ENCODE measurements at regions of chr1 and their contacts with region 1.

Region 1: GRCh38 chr1:92817986-92818764 is 13.7 kb upstream of the RPL5 start:
- DNase-seq: no peak
- H3K4me3 ChIP-seq: no peak overlapping the region
- H3K27me3 ChIP-seq: no peaks in the 10 kb centered on the region
- CTCF ChIP-seq: peak; percentile 73

Region 2: DNA sequence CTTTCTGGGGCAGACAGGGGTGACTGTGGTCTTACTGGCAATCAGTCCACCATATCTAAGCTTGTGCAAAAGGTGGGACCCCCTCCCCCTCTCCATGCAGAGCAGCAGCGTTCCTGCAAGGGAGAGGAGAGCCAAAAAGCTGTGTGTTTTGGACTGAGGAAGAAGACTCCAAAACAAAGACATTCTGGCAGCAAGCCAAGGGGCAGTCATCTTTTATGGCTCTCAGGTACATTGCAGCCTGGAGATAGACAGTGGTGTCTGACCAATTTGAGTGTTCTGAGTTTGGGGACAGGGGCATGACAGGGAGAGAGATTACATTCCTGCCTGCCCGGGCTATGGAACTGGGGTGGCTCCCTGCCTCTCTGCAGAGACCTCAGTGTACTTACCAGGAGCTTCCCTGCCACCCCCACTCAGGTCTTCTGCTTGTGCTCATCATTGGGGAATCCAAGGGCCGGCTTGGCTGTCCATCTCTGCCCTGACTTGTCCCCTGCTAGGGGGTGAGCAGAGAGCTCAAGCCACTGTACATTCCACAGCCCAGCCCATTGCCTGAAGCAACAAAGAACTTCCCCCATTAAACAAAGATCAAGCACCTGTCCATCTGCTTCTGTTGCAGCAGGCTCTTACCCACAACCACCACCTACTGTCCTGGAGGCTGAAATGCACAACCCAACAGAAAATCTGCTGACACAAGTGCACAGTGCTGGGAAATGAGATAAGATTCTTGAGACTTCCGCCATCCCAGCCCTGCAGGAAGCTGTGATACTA is 164.4 kb before region 1 on chr1:
- CTCF ChIA-PET with region 1: no interaction called
- POLR2A ChIA-PET with region 1: no interaction called
- DNase-seq: no peak
- H3K4me3 ChIP-seq: no peak overlapping the region
- H3K27me3 ChIP-seq: no peaks in the 10 kb centered on the region
- CTCF ChIP-seq: no peak

Region 3: DNA sequence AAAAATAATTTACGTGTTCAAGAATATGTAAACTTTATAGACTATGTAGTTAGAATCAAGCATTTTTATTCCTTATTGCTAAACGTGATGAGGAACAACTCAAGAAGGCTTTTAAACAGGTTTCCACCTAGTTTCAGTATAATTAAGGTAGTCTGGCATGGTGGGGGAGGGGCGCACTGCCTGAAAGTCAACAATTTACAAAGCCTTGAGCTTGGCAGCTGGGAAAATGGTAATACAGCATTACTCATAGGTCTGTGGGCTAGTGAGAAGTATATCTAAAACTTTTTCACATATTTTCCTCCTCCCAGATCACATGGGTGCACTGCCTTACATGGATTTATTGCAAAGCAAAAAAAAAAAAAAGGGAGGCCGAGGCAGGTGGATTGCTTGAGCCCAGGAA is 108.4 kb before region 1 on chr1:
- CTCF ChIA-PET with region 1: no interaction called
- POLR2A ChIA-PET with region 1: no interaction called
- DNase-seq: no peak
- H3K4me3 ChIP-seq: no peak overlapping the region
- H3K27me3 ChIP-seq: no peaks in the 10 kb centered on the region
- CTCF ChIP-seq: no peak

Region 4: GRCh38 chr1:92749024-92749634 is 69.0 kb before region 1 on chr1:
- CTCF ChIA-PET with region 1: interaction called, 68 read pairs
- POLR2A ChIA-PET with region 1: no interaction called
- DNase-seq: no peak
- H3K4me3 ChIP-seq: no peak overlapping the region
- H3K27me3 ChIP-seq: no peaks in the 10 kb centered on the region
- CTCF ChIP-seq: peak; percentile 81

Region 5: DNA sequence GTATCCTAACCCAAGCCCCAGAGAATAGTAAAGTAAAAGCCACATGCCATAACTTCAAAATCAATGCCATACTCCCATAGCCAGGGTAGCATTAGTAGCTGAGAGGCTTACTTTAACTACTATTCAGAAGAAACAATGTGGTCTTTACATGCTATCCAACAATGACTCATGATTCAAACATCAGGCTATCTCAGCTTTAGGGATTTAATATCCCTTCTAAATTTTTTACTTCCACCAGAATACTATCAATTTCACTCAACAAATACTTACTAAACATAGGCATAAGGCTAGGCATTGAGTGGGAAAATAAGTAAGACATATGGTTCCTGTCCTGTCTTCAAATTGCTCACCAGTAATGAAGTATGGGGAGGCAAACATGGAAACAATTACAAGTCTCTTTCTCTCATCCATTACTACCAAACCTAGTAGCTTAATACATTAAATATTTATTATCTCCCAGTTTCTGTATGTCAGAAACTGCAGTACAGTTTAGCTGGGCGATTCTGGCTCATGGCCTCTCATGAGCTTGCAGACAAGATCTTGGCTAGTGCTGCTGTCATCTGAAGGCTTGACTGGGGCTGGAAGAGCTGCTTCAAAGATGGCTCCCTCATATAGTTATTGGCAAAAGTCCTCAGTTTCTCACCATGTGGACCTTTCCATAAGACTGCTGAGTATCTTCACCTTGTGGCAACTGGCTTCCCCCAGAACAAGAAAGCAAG is 64.0 kb before region 1 on chr1:
- CTCF ChIA-PET with region 1: interaction called, 68 read pairs
- POLR2A ChIA-PET with region 1: no interaction called
- DNase-seq: peak; percentile 71
- H3K4me3 ChIP-seq: no peak overlapping the region
- H3K27me3 ChIP-seq: no peaks in the 10 kb centered on the region
- CTCF ChIP-seq: no peak

Region 6: DNA sequence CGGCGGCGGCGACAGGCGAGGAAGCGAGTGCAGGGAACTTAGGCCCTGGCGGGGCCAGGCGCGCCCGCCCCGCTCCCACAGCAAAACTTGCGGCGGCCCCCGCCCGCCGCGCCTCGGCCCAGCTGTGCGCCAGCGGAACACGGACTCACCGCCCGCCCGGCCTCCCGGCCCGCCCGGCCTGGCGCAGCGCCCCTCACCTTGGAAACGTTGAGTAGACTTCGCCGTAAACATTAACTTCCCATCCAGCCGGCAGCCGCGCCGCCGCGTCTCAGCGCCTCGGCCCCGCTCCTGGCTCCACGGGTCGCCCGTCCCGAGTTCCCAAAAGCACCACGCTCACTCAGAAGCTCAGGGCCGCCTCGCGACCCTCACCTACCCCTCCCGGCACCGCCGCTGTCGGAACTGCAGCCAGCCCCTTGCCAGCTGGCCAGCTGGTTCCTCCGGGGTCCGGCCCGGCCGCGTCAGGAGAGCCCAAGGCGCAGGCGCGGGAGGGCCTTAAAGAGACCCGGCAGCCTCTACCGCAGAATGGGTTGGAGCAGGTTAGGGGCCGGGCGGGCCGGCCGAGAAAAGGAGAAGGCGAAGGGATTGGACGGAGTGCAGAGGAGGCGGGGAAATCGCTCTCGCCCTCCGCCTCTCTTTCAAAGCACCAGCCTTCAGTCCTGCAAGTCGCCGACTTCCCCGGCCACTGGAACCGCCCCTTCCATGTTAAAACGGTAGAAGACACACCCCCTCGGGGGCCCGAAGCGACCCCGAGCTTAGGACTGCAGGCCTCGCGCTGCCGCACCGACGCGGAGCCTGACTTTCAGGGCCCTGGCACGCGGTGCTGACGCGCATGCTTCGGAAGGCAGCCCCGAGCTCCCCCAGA is 33.3 kb before region 1 on chr1 and contains the start of gene EVI5:
- CTCF ChIA-PET with region 1: interaction called, 10 read pairs
- POLR2A ChIA-PET with region 1: no interaction called
- DNase-seq: peak; percentile 92
- H3K4me3 ChIP-seq: peak within 1 kb of the TSS; percentile 89
- H3K27me3 ChIP-seq: no peaks in the 10 kb centered on the region
- CTCF ChIP-seq: peak; percentile 45
- polyA plus RNA-seq, gene EVI5: 8.6 and 13.0 TPM in 2 replicates

Region 7: DNA sequence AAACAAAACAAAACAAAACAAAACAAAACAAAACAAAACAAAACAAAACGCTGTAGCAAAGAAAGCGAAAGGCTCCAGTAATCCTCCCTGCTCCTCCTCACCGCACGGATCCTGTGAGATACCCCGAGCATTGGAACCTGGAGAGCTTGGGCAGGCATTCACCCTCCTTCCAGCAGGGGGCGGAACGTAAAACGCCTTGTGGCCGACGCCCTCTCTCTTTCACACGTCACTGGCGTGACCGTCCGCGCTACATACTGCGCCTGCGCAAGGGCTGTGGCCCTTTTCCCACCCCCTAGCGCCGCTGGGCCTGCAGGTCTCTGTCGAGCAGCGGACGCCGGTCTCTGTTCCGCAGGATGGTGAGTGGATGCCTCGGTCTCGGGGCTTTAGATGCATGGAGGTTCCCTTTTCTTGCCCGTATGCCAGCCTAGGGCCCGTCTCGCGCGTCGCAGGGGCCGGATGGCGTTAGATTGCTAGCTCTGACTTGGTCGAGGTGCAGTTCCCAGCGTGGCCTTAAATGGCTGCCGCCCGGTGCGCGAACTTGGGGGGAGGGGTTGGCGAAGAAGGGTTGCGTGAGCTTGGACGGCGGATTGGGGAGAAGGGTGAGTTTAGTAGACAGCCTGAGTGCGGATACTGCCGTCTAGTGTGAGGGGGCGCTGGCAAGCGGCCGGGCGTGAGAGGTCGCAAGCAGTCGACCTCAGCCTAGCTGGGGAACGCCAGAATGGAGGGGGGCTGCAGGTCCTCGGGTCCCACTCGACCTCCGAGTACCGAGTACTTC is 13.8 kb after region 1 on chr1 and contains the start of gene RPL5:
- CTCF ChIA-PET with region 1: interaction called, 11 read pairs
- POLR2A ChIA-PET with region 1: no interaction called
- DNase-seq: peak; percentile 82
- H3K4me3 ChIP-seq: peak within 1 kb of the TSS; percentile 62
- H3K27me3 ChIP-seq: no peaks in the 10 kb centered on the region
- CTCF ChIP-seq: peak; percentile 97
- polyA plus RNA-seq, gene RPL5: 1,389 and 2,073 TPM in 2 replicates

Measured in BJ (cell line).